ENCODE measurements at regions of chr14 and their contacts with region 1.

Region 1: DNA sequence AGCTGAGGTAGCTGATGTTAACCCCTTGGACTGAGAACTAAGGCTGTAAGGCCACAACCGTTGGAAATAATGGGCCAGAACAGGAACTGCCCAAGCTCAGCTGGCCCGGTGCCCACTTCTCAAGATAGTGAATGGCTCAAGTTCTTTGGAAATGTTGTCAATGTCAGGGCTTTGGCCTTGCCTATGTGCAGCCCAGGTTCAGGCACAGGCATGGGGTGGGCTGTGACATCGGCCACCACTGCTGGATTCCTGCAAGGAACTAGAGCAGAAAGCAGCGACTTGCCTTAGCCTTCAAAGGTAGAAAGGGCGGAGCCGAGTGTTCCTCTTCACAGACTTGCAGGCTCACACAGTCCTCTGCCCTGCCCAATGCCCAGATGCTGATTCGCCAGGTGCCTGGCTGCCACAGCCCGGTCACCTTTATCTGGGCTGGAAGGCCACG is 291.2 kb downstream of the ZFP36L1 start:
- DNase-seq: no peak

Region 2: GRCh38 chr14:68458840-68459469 is 42.7 kb before region 1 on chr14:
- intact Hi-C with region 1: loop called (anchors 5 kb)
- DNase-seq: no peak